ENCODE measurements at regions of chr3 and their contacts with region 1.

Region 1: DNA sequence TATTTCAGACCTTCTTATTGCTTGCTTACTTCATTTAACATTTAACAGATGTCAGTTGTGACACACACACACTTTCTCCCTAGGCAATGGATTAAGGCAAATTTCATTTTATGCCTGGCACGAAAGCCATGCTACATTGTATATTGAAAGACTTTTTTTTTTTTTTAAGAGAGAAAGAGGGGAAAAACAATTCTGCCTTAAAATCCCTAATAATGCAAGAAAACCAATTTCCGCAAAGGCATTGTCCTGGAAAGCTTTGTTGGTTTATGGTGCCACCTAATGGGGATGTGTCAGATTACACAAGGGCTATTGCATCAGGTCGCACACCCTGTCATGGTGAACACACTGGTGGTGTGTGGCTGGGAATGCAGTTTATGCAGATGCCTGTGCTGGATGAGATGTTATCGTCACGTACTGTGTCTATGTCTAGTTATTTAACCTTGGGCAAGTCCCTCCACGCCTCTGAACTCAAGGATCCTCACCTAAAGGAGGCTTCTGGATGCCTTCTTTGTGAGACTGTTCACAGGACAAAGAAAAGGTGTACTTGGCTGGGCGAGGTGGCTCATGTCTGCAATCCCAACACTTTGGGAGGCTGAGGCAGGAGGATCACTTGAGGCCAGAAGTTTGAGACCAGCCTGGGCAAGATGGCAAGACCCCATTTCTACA is 37.3 kb upstream of the RFTN1 start:
- DNase-seq: no peak
- ATAC-seq: peak; percentile 91 to 93
- H3K4me3 ChIP-seq: peak overlapping the region; percentile 7
- H3K27ac ChIP-seq: no peak overlapping the region
- H3K4me1 ChIP-seq: no peaks in the 10 kb centered on the region
- H3K27me3 ChIP-seq: no peaks in the 10 kb centered on the region
- CTCF ChIP-seq: peak; percentile 92

Region 2: DNA sequence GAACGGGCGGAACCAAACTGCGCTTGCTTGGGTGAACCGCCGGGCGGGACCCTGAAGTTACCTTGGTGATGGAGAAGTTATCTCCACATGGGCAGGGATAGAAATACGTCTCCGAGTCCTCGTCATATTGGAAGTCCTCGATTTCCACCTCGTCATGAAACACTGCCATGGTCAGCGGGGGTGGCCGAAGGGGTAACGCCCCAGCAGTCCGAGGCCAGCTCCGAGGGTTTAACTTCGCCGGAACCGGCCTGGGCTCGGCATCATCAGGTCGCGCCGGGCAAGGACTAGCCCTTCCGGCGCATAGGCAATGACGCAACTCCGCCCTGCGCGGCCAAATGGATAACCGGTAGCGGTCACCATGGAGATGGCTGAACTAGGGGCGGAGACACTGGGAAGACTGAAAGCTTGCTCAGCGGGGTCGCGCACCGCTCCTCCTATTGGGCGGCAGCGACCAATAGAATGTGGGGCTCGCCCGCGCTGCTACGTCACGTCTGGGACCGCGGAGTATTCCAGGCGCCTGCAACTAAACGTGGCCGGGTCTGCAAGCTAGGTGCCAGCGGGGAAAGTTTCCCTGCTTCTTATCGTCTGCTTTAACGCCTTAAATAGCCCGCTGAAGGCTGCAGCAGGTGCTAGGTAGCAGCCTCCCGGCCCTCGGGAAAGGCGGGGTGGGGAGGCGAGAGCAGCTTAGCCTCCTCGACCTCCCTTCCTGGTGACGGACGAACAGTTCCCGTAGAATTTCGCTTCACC is 285.9 kb before region 1 on chr3 and contains the starts of genes DPH3 and OXNAD1:
- intact Hi-C with region 1: loop called (anchors 5 kb)
- DNase-seq: peak; percentile 100
- ATAC-seq: peak; percentile 100
- H3K4me3 ChIP-seq: peak within 1 kb of the TSS; percentile 77
- H3K27ac ChIP-seq: peak within 1 kb of the TSS; percentile 97
- H3K4me1 ChIP-seq: peaks cover 51% of the 10 kb centered on the region
- H3K27me3 ChIP-seq: no peaks in the 10 kb centered on the region
- CTCF ChIP-seq: no peak
- total RNA-seq, gene DPH3: 29.0 TPM
- total RNA-seq, gene OXNAD1: 13.1 TPM

Region 3: DNA sequence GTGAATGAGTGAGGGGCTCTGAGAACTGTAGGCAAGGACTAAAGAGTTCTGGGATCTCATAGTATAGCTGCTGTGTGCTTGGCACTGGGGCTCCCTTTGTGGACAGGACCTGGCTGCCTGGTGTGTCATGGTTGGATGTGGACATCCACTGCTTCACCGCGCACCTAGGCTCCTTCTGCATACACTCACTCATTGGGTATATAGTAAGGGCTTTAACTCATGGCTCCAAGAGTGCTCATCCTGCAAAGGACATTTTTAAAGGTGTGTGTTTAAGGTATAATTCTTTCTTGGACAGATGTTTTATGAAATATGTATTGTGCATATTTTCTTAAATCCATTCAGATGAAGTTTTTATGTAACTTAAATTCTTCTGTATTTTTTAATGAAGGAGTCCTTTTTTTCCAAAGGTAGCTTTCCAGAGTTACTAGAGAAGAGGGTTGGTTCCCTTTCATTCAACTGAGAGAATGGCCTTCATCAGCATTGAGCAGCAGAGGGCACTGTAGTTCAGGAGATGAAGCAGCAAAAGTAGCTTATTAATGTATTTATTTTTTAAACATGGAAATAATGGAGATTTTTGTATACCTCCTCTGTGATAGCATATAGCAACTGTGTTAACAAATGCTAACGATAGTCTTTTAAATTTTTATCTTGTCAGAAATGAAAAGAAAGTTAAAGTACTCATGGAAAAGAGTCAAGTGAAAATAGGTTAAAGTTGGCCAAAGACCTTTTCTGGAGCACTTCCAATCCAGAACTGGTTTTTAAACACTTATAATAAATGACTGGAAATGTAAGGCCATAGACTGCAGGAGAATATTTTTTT is 260.6 kb before region 1 on chr3:
- intact Hi-C with region 1: loop called (anchors 5 kb)
- DNase-seq: no peak
- ATAC-seq: peak; percentile 78 to 80
- H3K4me3 ChIP-seq: no peak overlapping the region
- H3K27ac ChIP-seq: no peak overlapping the region
- H3K4me1 ChIP-seq: peaks cover 17% of the 10 kb centered on the region
- H3K27me3 ChIP-seq: no peaks in the 10 kb centered on the region
- CTCF ChIP-seq: peak; percentile 83

Region 4: DNA sequence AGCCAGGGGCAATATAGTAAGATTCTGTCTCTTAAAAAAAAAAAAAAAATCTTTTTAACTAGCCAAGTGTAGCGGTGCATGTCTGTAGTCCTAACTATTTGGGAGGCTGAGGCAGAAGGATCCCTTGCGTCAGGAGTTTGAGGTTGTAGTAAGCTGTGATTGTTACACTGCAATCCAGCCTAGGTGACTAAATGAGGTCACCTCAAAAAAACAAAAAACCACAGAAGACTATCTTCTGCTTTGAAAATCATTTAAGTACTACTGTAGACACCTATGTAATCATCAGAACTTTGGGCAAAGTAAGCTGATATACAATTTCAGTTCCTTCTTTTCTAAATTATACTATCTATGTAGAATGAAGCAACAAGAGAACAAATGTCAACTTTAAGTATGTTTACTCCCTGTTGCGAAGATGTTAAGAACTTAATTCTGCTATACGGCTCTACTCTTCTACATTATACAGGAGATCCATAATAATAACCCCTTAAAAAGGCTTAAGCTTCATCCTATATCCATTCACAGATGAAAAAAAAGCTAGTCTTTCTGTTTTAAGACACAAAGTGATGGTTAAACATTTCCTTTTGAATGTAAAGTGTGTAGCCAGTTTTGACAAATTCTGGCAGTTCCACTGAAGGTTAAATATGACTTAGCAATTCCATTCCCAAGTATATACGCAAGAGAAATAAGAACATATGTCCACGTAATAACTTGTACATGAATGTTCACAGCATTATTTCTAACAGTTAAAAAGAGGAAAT is 39.2 kb after region 1 on chr3:
- intact Hi-C with region 1: no loop called
- DNase-seq: no peak
- ATAC-seq: no peak
- H3K4me3 ChIP-seq: no peak overlapping the region
- H3K27ac ChIP-seq: no peak overlapping the region
- H3K4me1 ChIP-seq: no peaks in the 10 kb centered on the region
- H3K27me3 ChIP-seq: no peaks in the 10 kb centered on the region
- CTCF ChIP-seq: no peak